Naive thymus-derived CD4-positive, alpha-beta T cell (primary cell): ENCODE measurements at regions of chr18 and their contacts with region 1.

Region 1: DNA sequence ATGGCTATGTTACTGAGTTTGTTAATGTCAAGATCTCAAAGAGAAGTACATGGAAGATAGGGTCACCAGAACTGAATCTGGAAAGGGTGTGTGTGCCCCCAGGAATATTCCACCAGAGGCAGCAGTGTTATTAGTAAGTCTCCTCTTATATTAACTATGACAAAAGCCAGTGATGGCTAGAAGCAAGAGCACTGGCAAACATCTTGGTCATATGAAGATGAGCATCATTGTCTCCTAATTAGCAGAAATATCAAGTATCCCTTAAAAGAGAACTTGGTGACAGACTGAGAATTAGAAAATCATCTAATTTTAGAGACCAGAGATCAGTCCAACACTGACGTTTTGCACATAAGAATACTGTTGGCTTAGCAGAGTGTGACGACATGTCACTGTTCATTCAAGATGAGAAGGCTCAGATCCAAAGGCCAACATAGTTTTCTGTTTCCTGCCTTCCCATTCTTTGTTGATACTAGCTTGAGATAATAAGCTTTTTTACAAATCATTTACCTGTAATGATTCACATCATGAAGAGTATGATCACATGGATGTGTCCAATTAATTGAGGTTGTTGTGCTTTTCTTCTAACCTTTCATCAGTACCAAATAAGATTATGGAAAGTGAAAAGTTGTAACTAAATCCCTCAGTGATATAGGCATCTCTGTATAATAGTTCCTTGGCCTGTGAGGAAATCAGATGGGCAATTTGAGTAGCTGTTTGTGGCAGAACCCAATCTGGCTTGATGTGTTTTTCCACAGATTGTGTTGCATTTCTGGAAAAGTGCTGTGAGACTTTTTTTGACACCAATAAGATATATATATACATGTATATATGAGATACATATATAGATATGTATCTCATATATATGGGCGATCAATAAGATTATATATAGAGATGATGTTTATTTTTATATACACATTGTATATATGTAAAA is 44.5 kb downstream of the MAPRE2 start:
- DNase-seq: no peak
- ATAC-seq: no peak
- H3K4me3 ChIP-seq: no peak overlapping the region
- H3K4me3 Mint-ChIP-seq: no peak overlapping the region
- H3K27ac ChIP-seq: no peak overlapping the region
- H3K27ac Mint-ChIP-seq: peak overlapping the region in 1 of 9 donors; percentile 19
- H3K4me1 ChIP-seq: no peaks in the 10 kb centered on the region
- H3K4me1 Mint-ChIP-seq: peaks cover 2 to 74% (median 62%) of the 10 kb centered on the region in 7 donors
- H3K27me3 ChIP-seq: no peaks in the 10 kb centered on the region
- H3K27me3 Mint-ChIP-seq: no peaks in the 10 kb centered on the region

Region 2: GRCh38 chr18:35019933-35020332 is 65.8 kb before region 1 on chr18:
- CTCF ChIA-PET with region 1: no interaction called
- POLR2A ChIA-PET with region 1: no interaction called
- intact Hi-C with region 1: no loop called
- DNase-seq: no peak
- ATAC-seq: no peak
- H3K4me3 ChIP-seq: no peak overlapping the region
- H3K4me3 Mint-ChIP-seq: no peak overlapping the region
- H3K27ac ChIP-seq: no peak overlapping the region
- H3K27ac Mint-ChIP-seq: no peak overlapping the region
- H3K4me1 ChIP-seq: no peaks in the 10 kb centered on the region
- H3K4me1 Mint-ChIP-seq: no peaks in the 10 kb centered on the region
- H3K27me3 ChIP-seq: no peaks in the 10 kb centered on the region
- H3K27me3 Mint-ChIP-seq: peaks cover 0 to 27% (median 0%) of the 10 kb centered on the region in 5 donors

Region 3: GRCh38 chr18:35110554-35111485 is 25.1 kb after region 1 on chr18:
- CTCF ChIA-PET with region 1: no interaction called
- POLR2A ChIA-PET with region 1: no interaction called
- intact Hi-C with region 1: loop called in 1 of 2 experiments (anchors 2 kb)
- DNase-seq: no peak
- ATAC-seq: no peak
- H3K4me3 ChIP-seq: no peak overlapping the region
- H3K4me3 Mint-ChIP-seq: peak overlapping the region in 3 of 10 donors; percentile 14 to 45 (median 35)
- H3K27ac ChIP-seq: no peak overlapping the region
- H3K27ac Mint-ChIP-seq: peak overlapping the region in 4 of 9 donors; percentile 1 to 48 (median 20)
- H3K4me1 ChIP-seq: peaks cover 9 to 12% of the 10 kb centered on the region in 2 donors
- H3K4me1 Mint-ChIP-seq: peaks cover 8 to 81% (median 44%) of the 10 kb centered on the region in 7 donors
- H3K27me3 ChIP-seq: no peaks in the 10 kb centered on the region
- H3K27me3 Mint-ChIP-seq: no peaks in the 10 kb centered on the region

Region 4: DNA sequence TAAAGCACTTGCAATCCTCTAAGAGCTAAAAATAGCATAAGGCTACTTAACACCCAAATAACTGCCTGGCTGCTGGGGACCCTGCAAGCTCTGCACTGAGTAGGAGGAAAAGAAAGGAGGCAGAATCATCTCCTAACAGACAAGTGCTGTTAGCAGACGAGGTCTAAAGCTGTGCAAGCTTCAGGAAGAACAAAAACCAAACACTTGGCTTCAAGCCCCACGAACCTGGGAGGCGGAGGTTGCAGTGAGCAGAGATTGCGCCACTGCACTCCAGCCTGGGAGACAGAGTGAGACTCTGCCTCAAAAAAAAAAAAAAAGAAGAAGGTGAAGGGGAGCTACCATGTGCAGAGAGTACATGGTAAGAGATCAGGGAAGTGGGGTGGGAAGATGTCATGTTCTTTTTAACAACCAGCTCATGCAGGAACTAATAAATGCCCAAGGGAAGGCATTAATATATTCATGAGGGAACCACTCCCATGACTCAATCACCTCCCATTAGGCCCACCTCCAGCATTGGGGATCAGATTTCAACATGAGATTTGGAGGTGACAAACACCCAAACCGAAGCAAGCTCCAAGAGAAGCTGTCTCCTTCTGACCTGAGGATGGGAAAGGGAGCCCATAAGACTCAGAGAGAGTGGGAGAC is 440.9 kb after region 1 on chr18:
- CTCF ChIA-PET with region 1: no interaction called
- POLR2A ChIA-PET with region 1: no interaction called
- intact Hi-C with region 1: no loop called
- DNase-seq: no peak
- ATAC-seq: no peak
- H3K4me3 ChIP-seq: no peak overlapping the region
- H3K4me3 Mint-ChIP-seq: no peak overlapping the region
- H3K27ac ChIP-seq: no peak overlapping the region
- H3K27ac Mint-ChIP-seq: no peak overlapping the region
- H3K4me1 ChIP-seq: peaks cover 0 to 3% of the 10 kb centered on the region in 2 donors
- H3K4me1 Mint-ChIP-seq: peaks cover 0 to 10% (median 5%) of the 10 kb centered on the region in 7 donors
- H3K27me3 ChIP-seq: no peaks in the 10 kb centered on the region
- H3K27me3 Mint-ChIP-seq: peaks cover 10 to 61% (median 46%) of the 10 kb centered on the region in 5 donors